ENCODE measurements at regions of chr17 and their contacts with region 1.

Region 1: GRCh38 chr17:39527220-39527813 is 66.0 kb downstream of the CDK12 start:
- DNase-seq: no peak
- H3K4me3 ChIP-seq: no peak overlapping the region
- H3K27ac ChIP-seq: no peak overlapping the region
- H3K4me1 ChIP-seq: no peaks in the 10 kb centered on the region
- H3K27me3 ChIP-seq: no peaks in the 10 kb centered on the region
- CTCF ChIP-seq: peak in 2 of 3 experiments; percentile 38 to 68; a peak in 2 of 4 replicates
- EP300 ChIP-seq: no peak
- POLR2A ChIP-seq: no peak
- RAD21 ChIP-seq: peak; percentile 30 to 42; a peak in 3 of 4 replicates

Region 2: DNA sequence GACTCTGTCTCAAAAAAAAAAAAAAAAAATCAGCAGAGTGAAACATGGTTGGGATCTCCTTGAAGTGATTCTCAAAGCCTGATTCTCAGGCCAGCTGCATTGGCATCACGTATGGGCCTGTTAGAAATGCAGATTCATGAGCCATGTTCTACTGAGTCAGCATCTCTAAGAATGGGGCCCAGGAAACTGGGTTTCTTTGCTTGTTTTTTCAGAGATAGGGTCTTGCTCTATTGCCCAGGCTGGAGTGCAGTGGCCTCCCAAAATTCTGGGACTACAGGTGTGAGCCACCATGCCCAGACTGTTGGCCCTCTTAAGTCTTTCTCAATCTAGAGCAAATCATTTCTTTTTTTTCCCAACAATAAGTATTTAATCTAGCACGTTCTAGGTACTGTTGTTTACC is 18.3 kb before region 1 on chr17:
- CTCF ChIA-PET with region 1: no interaction called
- POLR2A ChIA-PET with region 1: no interaction called
- DNase-seq: no peak
- H3K4me3 ChIP-seq: no peak overlapping the region
- H3K27ac ChIP-seq: no peak overlapping the region
- H3K4me1 ChIP-seq: no peaks in the 10 kb centered on the region
- H3K27me3 ChIP-seq: no peaks in the 10 kb centered on the region
- CTCF ChIP-seq: no peak
- EP300 ChIP-seq: no peak
- POLR2A ChIP-seq: no peak
- RAD21 ChIP-seq: no peak

Region 3: DNA sequence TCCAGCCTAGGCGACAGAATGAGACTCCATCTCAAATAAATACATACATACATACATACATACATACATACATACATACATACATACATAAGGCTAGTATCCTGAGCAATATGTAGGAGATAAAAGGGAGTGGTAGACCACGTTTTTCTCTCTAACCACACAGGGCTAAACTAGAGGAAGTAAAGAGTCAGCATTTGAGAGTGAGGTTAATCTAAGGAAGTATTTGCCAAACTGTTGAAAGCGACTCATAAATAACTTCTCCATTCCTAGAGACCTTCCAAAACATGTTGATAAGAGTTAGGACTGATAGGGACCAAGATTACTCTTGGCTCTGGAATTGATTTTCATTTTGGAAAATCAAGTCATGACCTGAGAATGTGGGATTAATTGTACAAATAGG is 11.5 kb after region 1 on chr17:
- CTCF ChIA-PET with region 1: interaction called, 17 read pairs
- POLR2A ChIA-PET with region 1: interaction called, 4 read pairs
- DNase-seq: no peak
- H3K4me3 ChIP-seq: no peak overlapping the region
- H3K27ac ChIP-seq: no peak overlapping the region
- H3K4me1 ChIP-seq: no peaks in the 10 kb centered on the region
- H3K27me3 ChIP-seq: no peaks in the 10 kb centered on the region
- CTCF ChIP-seq: no peak
- EP300 ChIP-seq: no peak
- POLR2A ChIP-seq: no peak
- RAD21 ChIP-seq: no peak

Measured in H1 (cell line).